Posterior vena cava (tissue), 2 donors: ENCODE measurements at regions of chr7 and their contacts with region 1.

Region 1: GRCh38 chr7:106461993-106462859 is 177.4 kb upstream of the NAMPT start:
- DNase-seq: no peak

Region 2: GRCh38 chr7:106273009-106273668 is 189.1 kb before region 1 on chr7:
- intact Hi-C with region 1: loop called in 1 of 2 experiments (anchors 10 kb)
- DNase-seq: no peak